Dorsolateral prefrontal cortex (tissue), 120 donors: ENCODE measurements at regions of chr16 and their contacts with region 1.

Region 1: DNA sequence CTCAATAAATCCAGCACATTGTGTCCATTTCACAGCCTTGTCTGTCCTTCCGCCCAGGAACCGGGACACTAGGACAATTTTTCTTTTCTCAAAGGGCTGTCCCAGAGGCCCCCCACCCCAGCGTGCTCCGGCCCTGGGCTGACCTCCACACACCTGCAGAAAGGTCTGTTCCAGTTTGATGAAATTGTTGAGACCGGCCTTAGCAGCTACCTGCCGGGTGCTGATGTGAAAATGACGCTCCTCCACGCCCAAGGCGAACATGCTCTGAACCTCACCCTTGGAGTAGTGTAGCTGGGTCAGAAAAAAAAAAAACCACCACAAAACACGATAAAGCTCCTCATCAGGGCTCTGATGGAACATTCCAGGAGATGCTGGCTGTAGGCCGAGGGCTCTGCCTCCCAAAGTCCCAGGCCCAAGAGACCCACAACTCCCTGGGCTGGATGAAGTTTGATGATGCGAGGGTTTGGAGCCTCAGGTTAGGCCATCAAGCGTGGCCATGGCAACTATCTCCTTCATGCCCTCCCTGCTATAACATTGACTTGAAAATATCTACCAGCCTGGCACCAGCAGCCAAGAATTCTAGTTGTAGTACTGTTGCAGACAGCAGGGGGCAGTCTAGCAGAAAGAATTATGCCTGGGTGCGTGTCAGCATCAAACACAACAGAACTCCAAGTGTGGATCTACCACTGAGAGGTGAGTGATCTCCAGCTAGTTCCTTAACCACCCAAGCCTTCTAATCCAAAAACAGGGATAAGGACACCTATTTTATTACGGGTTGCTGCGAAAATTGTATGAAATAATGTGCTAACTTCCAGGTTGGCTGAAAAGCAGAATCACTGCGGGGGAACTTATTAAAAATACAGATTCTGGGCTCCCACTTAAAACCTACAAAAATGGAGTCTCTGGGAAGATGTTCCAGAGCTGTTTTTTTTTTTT is 62.1 kb downstream of the RMI2 start:
- DNase-seq: peak in 3 of 10 donors; percentile 38 to 77 (median 47)
- H3K4me3 ChIP-seq: no peak overlapping the region
- H3K27ac ChIP-seq: no peak overlapping the region
- H3K27me3 ChIP-seq: no peaks in the 10 kb centered on the region
- CTCF ChIP-seq: peak in 55 of 56 donors; percentile 28 to 86 (median 65)

Region 2: DNA sequence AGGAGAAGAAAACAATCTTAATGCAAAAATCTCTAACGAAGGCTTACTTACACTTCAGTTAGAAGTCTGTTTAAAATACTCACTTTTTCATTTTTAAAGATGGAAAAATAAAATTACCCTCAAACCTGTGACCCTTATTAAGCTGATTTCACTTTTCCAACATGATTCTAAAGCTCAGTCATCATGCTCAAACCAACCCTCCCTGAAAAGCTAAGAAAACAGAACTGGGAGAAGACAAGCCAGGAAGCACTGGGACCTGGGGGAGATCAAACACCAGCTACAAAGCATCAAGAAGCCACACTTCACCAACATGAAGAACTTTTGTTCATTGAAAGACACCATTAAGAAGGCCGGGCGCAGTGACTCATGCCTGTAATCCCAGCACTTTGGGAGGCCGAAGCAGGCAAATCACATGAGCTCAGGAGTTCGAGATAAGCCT is 90.6 kb after region 1 on chr16:
- intact Hi-C with region 1: loop called in 1 of 2 experiments (anchors 5 kb)
- DNase-seq: no peak
- H3K4me3 ChIP-seq: peak overlapping the region in 1 of 59 donors; percentile 13
- H3K27ac ChIP-seq: peak overlapping the region in 52 of 59 donors; percentile 4 to 85 (median 75)
- H3K27me3 ChIP-seq: no peaks in the 10 kb centered on the region
- CTCF ChIP-seq: no peak

Region 3: DNA sequence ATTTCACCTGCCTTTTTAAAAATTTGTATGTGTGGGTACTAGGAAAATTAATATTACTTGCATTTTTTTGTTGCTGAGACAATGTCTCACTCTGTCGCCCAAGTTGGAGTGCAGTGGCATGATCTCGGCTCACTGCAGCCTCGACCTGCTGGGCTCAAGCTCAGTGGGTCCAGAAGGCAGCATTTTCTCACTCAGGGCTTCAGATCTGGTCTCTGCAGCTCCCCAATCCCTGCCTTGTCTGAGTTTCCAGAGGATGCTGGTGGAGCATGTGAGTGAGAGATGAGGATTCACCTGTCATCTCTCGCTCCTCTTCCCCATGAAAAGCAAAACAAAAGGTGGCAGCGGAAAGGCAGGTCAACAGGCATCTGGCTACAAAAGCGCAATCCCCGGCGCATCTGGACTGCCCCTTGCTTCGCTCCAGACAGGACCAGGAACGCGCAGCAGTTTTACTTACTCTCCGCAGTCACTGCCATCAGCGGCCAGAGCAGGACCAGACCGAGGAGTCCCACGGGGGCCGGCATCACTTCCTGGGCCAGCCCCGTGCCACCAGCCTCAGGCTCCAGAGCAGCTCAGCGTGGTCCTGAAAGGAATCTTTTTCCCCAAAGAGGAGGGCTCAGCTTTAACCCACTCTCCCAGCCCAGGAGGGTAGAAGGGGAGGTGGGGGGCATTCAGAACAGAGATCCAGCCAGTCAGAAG is 119.5 kb after region 1 on chr16:
- intact Hi-C with region 1: loop called (anchors 10 kb)
- DNase-seq: no peak
- H3K4me3 ChIP-seq: peak overlapping the region in 9 of 59 donors; percentile 0 to 36 (median 22)
- H3K27ac ChIP-seq: no peak overlapping the region
- H3K27me3 ChIP-seq: peaks cover 0 to 5% (median 0%) of the 10 kb centered on the region in 45 donors
- CTCF ChIP-seq: no peak

Region 4: DNA sequence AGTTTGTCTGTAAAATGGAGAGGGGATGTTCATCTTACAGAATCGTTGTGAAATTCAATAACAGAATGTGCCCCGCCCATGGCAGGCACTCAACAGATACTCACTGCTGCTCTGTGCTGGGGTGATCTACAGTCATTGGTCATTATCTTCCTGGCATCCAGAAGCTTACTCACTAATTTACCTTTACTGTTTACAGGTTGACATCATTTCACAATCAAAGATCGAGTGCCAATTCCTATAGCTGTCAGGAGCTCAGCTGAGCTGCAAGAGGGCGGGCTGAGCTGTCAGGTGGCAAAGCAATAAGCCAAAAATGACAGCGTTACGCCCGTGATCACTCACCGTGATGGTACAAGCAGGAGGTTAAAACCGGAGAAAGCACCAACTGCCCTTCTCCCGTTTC is 128.2 kb after region 1 on chr16:
- intact Hi-C with region 1: loop called in 1 of 2 experiments (anchors 10 kb)
- DNase-seq: no peak
- H3K4me3 ChIP-seq: no peak overlapping the region
- H3K27ac ChIP-seq: no peak overlapping the region
- H3K27me3 ChIP-seq: no peaks in the 10 kb centered on the region
- CTCF ChIP-seq: no peak

Region 5: DNA sequence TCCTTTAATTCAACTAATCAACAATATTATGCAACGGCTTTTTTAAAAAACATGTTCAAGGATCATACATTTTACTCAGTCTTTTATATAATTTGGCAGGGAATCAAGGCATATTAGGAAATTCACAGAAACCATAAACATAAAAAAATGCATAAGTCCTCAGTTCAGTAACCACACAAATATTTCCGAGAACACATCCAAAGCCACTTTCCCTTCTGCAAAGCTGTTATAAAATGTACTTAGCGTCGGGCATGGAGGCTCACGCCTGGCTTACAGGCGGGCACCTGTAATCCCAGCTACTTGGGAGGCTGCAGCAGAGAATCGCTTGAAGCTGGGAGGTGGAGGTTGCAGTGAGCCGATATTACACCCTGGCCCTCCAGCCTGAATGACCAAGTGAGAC is 399.4 kb after region 1 on chr16:
- intact Hi-C with region 1: loop called in 1 of 2 experiments (anchors 5 kb)
- DNase-seq: no peak
- H3K4me3 ChIP-seq: no peak overlapping the region
- H3K27ac ChIP-seq: no peak overlapping the region
- H3K27me3 ChIP-seq: no peaks in the 10 kb centered on the region
- CTCF ChIP-seq: no peak